HEK293 (cell line): ENCODE measurements at regions of chr11 and their contacts with region 1.

Region 1: DNA sequence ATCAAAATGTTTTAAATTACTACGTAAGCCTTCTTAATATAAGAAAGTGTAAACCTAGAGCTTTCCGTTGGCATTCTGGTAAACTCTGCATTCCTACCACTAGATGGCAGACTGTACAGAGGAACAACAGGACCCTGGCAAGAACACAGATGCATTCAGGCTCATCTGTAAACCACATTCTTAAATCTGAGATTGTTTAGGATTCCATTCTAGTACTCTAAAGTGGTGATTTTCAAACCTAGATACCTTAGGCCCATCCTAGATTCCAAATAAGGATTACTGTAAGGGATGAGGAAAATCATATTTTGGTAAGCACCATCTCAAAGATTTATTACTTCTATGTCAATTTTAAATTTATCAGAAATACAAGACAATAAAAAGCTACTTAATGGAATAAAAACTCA is 26.9 kb downstream of the PICALM start:
- H3K4me3 ChIP-seq: no peak overlapping the region
- H3K27ac ChIP-seq: no peak overlapping the region
- H3K4me1 ChIP-seq: 0 out of 2 replicates have a peak, but pooled peaks cover 2% of the 10 kb centered on the region
- CTCF ChIP-seq: 0 out of 2 replicates have a peak, but pooled peaks have one; percentile 25

Region 2: GRCh38 chr11:86003654-86004053 is 38.3 kb before region 1 on chr11:
- CTCF ChIA-PET with region 1: no interaction called
- POLR2A ChIA-PET with region 1: no interaction called
- H3K4me3 ChIP-seq: no peak overlapping the region
- H3K27ac ChIP-seq: no peak overlapping the region
- H3K4me1 ChIP-seq: no peaks in the 10 kb centered on the region
- CTCF ChIP-seq: no peak

Region 3: GRCh38 chr11:86052693-86053641 is 11.0 kb after region 1 on chr11:
- CTCF ChIA-PET with region 1: interaction called, 45 read pairs
- POLR2A ChIA-PET with region 1: no interaction called
- H3K4me3 ChIP-seq: no peak overlapping the region
- H3K27ac ChIP-seq: no peak overlapping the region
- H3K4me1 ChIP-seq: no peaks in the 10 kb centered on the region
- CTCF ChIP-seq: no peak

Region 4: DNA sequence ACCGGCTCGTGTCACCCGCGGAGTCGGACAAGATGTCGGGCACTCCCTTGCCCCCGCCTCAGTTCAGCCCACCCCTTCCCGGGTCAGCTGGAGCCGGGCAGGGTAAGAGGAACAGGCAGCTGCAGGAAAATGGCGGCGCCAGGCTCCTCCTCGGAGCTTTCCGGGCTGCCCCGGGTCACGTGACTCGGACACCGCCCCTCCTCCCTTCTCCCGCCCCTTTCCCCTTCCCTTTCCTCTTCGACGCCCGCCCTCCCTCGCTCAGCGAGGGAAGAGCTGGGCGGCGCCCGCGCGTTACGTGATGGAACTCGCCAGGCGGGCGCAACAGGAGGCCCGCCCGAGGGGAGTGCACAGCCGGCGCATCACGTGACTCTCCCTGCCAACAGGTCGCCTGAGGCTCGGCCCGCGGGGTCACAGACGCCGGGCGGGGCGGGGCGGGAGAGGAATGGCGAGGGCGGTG is 27.0 kb after region 1 on chr11 and contains the start of gene PICALM:
- CTCF ChIA-PET with region 1: interaction called, 14 read pairs
- POLR2A ChIA-PET with region 1: interaction called, 3 read pairs
- H3K4me3 ChIP-seq: peak within 1 kb of the TSS; percentile 69
- H3K27ac ChIP-seq: peak within 1 kb of the TSS; percentile 67
- H3K4me1 ChIP-seq: peaks cover 3% of the 10 kb centered on the region; the same call in 1 of the 2 replicates
- CTCF ChIP-seq: no peak

Region 5: DNA sequence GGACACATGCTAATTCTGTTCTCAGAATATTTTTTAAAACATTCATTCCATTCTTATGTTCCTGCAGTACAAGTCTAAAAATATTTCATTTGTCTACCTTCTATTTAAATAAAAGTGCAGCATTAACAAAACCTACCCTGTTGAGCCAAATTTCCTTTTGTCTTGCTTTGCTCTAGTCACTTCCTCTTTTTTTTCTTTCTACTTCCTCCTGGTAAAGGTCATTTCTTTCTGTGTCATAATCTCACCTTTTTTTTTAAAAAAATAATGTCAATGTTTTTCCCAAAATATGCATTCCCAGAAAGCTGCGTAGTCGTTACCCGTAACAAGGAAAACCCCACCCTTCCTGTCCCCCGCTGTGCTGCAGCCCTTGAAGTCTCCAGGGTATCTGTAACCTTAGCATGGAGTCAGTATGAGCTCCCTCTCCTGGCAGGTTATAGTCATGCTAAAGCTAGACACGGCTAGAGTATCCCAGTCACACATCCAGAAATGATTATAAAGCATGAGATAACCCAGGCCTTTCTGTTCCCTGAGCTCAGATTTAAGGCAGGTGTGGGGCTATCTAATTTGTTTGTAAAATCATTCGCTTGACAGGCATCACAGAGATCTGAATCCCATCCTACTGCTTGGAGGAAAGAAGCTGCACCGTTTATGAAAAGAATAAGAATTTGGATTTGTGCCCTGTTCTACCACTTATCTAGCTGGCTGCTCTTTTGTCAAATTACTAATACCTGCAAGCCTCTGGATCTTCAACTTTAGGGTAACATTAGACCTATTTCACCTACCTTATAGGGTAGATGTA is 151.5 kb after region 1 on chr11:
- CTCF ChIA-PET with region 1: interaction called, 25 read pairs
- POLR2A ChIA-PET with region 1: no interaction called
- H3K4me3 ChIP-seq: peak overlapping the region; percentile 19; the same call in 1 of the 2 replicates
- H3K27ac ChIP-seq: no peak overlapping the region
- H3K4me1 ChIP-seq: no peaks in the 10 kb centered on the region
- CTCF ChIP-seq: peak; percentile 15; the same call in 1 of the 2 replicates

Region 6: DNA sequence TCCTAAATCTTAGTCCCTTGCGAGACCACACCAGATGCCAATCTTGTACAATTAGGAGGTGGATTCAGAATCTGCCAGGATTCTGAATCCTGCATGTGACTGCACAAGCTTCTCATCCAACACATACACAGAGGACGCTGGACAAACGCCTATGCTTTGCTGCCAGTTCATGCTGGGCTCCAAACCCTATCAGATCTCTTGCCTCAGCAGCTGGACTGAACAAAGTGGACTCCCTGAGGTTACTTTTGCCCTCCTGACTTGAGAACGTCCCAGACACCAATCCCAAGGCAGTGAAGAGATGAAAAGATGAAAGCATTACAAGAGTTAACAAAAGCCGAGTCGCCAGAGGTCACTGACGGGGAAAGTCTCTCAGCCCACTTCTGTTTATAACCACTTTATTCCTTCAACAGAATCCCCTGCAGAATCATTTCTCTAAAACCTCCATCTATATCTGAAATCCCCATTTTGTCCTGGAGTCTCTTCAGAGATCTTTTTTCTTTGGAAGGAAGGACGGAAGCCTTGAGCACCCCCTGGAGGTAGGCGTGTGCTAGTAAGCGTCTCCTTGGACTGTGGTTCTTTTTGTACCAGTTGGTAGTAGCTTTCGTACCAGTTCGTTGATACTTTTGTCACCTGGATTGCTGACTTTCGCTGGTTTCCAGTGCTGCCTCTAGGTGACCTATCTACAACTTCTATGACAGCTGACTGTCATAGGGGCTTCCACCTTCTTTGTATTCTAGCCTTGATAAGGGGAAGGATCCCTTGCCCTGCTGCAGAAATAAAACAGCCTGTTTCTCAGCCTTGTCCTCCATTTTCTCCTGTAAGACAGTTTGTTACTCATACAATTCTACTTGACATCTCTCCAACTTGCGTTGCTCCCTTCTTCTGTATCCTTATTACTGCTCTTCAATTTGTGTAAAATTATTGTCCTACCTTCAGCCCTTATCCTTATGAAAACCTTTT is 176.4 kb after region 1 on chr11:
- CTCF ChIA-PET with region 1: interaction called, 10 read pairs
- POLR2A ChIA-PET with region 1: no interaction called
- H3K4me3 ChIP-seq: peak overlapping the region; percentile 17
- H3K27ac ChIP-seq: no peak overlapping the region
- H3K4me1 ChIP-seq: no peaks in the 10 kb centered on the region
- CTCF ChIP-seq: 0 out of 2 replicates have a peak, but pooled peaks have one; percentile 31